Mammary epithelial cell (primary cell): ENCODE measurements at regions of chr7 and their contacts with region 1.

Region 1: GRCh38 chr7:139901056-139901795 is 72.2 kb downstream of the TBXAS1 start:
- DNase-seq: no peak
- H3K4me3 ChIP-seq: no peak overlapping the region
- H3K27ac ChIP-seq: no peak overlapping the region
- H3K4me1 ChIP-seq: no peaks in the 10 kb centered on the region
- H3K27me3 ChIP-seq: no peaks in the 10 kb centered on the region
- CTCF ChIP-seq: no peak

Region 2: DNA sequence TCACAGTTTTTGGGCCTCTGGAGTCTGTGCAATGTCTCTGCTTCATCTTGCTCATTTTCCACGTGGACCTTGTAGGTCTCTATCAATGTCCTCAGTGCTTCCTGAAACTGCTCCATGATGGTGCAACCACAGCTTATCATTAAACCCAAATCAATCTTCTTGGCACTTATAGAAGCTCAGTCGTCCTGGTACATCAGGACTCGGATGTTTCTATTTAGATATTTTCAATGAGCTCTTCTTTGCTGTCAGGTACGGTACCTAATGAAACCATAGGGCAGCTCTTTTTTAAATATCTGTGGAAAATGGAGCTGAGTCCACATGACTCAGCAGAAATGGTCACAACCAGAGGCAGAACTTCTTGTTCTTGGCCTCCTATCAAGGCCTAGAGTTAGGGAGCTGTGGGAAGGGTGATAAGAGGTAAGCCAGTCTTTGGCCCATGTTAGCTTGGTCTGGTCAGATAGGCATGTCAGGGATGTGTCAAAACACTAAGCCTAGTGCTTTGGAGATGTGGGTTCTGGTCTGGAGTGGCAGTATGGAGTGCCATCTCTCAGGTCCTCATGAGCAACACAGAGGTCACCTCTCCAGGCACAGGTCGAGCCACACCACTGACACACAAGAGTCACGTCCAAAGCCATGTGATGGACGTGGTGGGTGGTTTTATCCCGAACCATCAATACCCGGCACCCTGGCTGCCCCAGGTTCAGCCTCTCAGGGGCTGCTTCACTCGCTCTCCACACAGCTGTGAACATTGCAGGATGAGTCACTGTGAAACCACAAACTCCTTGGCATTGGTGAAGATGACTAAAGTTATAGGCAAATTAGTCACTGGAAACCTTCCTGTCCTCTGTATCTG is 14.9 kb after region 1 on chr7:
- CTCF ChIA-PET with region 1: no interaction called
- dilution Hi-C with region 1: no loop called
- in situ Hi-C with region 1: no loop called
- intact Hi-C with region 1: loop called (anchors 2 kb)
- DNase-seq: peak; percentile 98
- H3K4me3 ChIP-seq: no peak overlapping the region
- H3K27ac ChIP-seq: peak overlapping the region; percentile 69
- H3K4me1 ChIP-seq: peaks cover 29% of the 10 kb centered on the region
- H3K27me3 ChIP-seq: no peaks in the 10 kb centered on the region
- CTCF ChIP-seq: no peak

Region 3: DNA sequence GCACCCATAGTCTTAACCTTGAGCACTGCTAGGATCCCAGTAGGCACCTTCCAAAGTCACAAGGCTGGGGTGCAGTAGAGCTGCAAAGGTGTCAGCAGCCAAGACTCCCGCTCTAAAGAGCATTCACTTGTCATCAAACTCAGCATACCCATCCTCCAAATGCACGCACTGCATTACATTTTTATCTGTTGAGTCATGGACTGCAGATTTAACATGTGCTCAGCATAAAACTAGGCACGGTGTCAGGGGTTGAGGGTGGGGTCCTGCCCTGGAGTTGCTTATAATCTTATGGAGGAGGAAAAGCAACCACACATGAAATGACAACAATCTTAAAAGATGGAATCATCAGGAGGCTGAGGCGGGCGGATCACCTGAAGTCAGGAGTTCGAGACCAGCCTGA is 58.9 kb after region 1 on chr7:
- CTCF ChIA-PET with region 1: no interaction called
- dilution Hi-C with region 1: loop called (anchors 5 kb)
- in situ Hi-C with region 1: no loop called
- intact Hi-C with region 1: no loop called
- DNase-seq: no peak
- H3K4me3 ChIP-seq: no peak overlapping the region
- H3K27ac ChIP-seq: no peak overlapping the region
- H3K4me1 ChIP-seq: no peaks in the 10 kb centered on the region
- H3K27me3 ChIP-seq: no peaks in the 10 kb centered on the region
- CTCF ChIP-seq: no peak